CD8-positive, alpha-beta T cell (primary cell): ENCODE measurements at regions of chr21 and their contacts with region 1.

Region 1: GRCh38 chr21:43931489-43931888 is 66.5 kb downstream of the AGPAT3 start:
- DNase-seq: no peak
- ATAC-seq: no peak
- H3K4me3 ChIP-seq: no peak overlapping the region
- H3K4me3 Mint-ChIP-seq: no peak overlapping the region
- H3K27ac ChIP-seq: no peak overlapping the region
- H3K27ac Mint-ChIP-seq: no peak overlapping the region
- H3K4me1 ChIP-seq: no peaks in the 10 kb centered on the region
- H3K4me1 Mint-ChIP-seq: peaks cover 9% of the 10 kb centered on the region
- H3K27me3 ChIP-seq: no peaks in the 10 kb centered on the region
- H3K27me3 Mint-ChIP-seq: no peaks in the 10 kb centered on the region
- CTCF ChIP-seq: no peak

Region 2: DNA sequence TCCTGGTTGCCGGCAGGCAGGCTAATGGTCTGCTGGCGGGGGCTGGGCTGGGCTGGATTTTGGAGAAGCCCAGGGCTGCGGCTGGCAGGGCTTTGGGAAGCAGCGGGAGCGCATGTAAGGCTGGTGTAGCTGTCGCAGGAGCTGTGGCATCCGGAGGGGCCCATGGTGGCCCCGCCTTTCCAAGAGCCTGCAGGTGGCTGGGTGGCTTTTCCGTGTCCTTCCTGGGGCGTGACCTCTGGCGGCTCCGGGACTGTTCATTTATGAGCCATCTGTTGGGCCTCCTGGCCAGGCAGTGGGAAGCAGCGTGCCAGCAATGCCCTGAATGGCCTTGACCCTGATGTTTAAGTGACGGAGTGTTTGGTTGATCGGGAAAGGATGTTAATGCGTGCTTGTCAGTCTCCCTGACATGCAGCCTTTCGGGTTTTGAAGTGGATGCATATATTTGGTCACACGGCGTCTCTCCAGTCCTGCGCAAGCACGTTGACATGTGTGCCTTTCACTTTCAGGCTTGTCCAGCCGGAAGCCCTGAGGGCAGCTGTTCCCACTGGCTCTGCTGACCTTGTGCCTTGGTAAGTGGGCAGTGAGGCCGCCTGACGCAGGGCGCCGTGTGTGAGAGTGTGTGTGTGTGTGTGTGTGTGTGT is 27.9 kb before region 1 on chr21:
- CTCF ChIA-PET with region 1: no interaction called
- POLR2A ChIA-PET with region 1: no interaction called
- intact Hi-C with region 1: loop called in 1 of 2 experiments (anchors 1 kb)
- DNase-seq: no peak
- ATAC-seq: no peak
- H3K4me3 ChIP-seq: no peak overlapping the region
- H3K4me3 Mint-ChIP-seq: no peak overlapping the region
- H3K27ac ChIP-seq: no peak overlapping the region
- H3K27ac Mint-ChIP-seq: no peak overlapping the region
- H3K4me1 ChIP-seq: no peaks in the 10 kb centered on the region
- H3K4me1 Mint-ChIP-seq: peaks cover 14% of the 10 kb centered on the region
- H3K27me3 ChIP-seq: no peaks in the 10 kb centered on the region
- H3K27me3 Mint-ChIP-seq: no peaks in the 10 kb centered on the region
- CTCF ChIP-seq: no peak